ENCODE measurements at regions of chr3 and their contacts with region 1.

Region 1: DNA sequence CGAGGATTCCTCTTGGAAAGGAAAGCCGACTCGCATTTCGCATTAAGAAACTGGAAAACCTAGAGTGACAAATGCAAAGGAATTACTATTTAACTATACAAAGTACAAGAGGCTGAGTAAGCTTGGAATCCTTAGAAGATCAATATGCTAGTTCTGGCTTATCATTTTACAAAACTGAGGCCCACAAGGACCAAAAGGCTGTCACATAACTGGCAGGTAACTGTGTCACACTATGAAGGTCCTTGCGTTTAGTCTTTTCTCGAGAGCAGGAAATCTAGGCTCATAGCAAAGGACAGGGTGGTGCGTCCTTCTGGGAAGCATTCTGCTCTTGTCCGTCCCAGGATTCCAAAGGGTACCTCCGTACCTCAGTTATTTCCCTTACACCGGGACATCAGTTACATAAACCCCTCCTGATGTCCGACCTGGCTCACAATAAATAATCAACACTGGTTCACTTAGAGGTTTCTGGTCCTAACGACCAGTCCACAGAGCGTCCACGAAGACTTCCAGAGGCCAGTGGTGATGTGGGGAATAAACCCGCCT is 577 bp downstream of the RPL24 start:
- DNase-seq: no peak
- H3K4me3 Mint-ChIP-seq: peak overlapping the region; percentile 96
- H3K27ac Mint-ChIP-seq: peak overlapping the region; percentile 98
- H3K4me1 Mint-ChIP-seq: peaks cover 20% of the 10 kb centered on the region
- H3K27me3 Mint-ChIP-seq: no peaks in the 10 kb centered on the region
- CTCF ChIP-seq: no peak

Region 2: DNA sequence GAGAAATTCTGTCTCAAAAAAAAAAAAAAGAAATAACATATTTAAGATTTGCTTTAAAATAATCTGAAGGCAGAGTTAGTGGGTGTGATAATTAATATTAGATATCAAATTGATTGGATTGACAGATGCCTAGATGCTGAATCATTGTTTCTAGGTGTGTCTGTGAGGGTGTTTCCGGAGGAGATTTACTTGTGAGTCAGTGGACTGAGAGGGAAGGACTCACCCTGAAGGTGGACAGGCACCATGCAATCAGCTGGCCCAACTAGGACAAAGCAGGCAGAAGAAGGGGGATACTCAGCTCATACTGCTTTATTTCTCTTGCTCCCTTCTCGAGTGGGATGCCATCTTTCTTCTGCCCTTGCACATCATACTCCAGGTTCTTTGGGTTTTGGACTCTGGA is 17.2 kb after region 1 on chr3:
- CTCF ChIA-PET with region 1: interaction called, 13 read pairs
- POLR2A ChIA-PET with region 1: interaction called, 26 read pairs
- intact Hi-C with region 1: no loop called
- DNase-seq: peak; percentile 75
- H3K4me3 Mint-ChIP-seq: no peak overlapping the region
- H3K27ac Mint-ChIP-seq: peak overlapping the region; percentile 59
- H3K4me1 Mint-ChIP-seq: peaks cover 20% of the 10 kb centered on the region
- H3K27me3 Mint-ChIP-seq: no peaks in the 10 kb centered on the region
- CTCF ChIP-seq: no peak

Region 3: DNA sequence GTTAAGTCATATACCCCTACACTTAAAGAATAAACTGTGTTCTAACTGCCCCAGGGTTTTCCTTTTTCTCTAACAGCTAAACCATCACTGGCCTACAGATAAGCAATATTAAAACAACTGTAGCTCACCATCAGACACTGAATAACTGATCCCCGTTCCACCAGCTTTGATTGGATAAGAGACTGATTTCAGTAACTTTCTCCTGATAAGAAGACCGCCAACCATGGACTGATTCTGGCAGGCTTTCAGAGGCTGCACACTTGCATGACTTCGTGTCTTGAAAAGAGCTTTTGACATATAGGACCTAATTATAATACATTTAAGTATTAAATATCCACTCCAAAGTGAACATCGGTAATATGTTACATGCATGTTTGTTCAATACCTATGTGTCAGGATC is 23.2 kb after region 1 on chr3:
- CTCF ChIA-PET with region 1: interaction called, 13 read pairs
- POLR2A ChIA-PET with region 1: interaction called, 14 read pairs
- intact Hi-C with region 1: no loop called
- DNase-seq: no peak
- H3K4me3 Mint-ChIP-seq: no peak overlapping the region
- H3K27ac Mint-ChIP-seq: no peak overlapping the region
- H3K4me1 Mint-ChIP-seq: no peaks in the 10 kb centered on the region
- H3K27me3 Mint-ChIP-seq: no peaks in the 10 kb centered on the region
- CTCF ChIP-seq: no peak

Measured in MCF 10A (cell line).